SK-N-SH (cell line): ENCODE measurements at regions of chr3 and their contacts with region 1.

Region 1: DNA sequence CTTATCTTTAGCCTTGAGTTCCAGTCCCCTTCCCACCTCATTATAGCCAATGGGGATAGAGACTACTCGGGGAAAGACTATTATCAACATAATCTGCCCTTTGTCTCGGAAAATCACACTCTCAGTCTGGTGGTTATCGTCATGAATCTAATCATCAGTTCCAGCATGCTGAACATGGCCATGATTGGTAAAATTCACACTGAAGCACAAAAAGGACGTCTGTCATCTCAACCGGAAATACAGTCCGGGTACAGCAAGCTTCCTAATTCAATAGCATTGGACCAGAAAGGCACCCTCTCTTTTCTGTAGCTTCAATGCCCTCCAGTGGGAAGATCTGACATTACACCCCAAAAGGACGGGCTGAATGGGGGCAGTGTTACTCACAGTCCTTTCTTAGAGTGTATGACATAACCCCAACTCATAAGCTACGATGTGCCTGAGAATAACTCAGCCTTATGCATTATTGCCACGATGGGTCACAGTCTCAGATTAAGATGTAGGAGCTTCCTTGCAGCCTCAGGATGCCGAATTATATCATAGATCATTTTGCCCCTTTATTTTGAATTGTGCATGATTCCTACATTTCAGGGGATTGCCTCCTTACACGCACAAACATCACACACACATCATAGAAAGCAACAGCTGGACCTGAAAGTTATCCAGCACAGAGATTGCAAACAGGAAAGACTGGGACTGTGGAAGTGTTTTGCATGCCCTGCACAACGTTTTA is 390.4 kb upstream of the LMCD1 start:
- DNase-seq: peak; percentile 68
- H3K4me3 ChIP-seq: peak overlapping the region; percentile 19 to 40; a peak in 2 of 4 replicates
- H3K27ac ChIP-seq: peak overlapping the region in 1 of 2 experiments; percentile 72; a peak in 2 of 4 replicates
- H3K4me1 ChIP-seq: peaks cover 0 to 5% of the 10 kb centered on the region in 2 experiments; a peak in 2 of 4 replicates
- H3K27me3 ChIP-seq: no peaks in the 10 kb centered on the region
- CTCF ChIP-seq: peak; percentile 52
- EP300 ChIP-seq: peak in 1 of 2 experiments; percentile 58; a peak in 1 of 4 replicates
- RAD21 ChIP-seq: peak; percentile 97

Region 2: DNA sequence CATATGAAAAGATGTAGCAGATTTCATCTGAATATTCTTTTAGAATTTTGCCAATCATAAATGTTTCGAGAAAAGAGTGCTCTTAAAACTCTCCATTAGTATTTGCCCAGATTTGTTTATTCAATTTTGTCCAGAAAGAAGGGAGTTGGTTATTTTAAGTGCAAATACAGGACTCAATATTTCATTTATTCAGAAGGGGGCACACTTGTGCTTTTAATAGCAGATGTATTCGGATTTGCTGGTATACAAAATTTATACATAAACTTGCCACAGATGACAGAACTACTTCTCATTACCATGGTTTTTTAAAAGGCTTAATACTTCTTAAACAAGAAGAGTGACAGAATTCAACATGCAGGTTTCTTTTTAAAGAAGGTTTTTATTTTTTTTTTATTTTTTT is 1320.1 kb before region 1 on chr3:
- CTCF ChIA-PET with region 1: interaction called, 15 read pairs
- POLR2A ChIA-PET with region 1: no interaction called
- DNase-seq: no peak
- H3K4me3 ChIP-seq: no peak overlapping the region
- H3K27ac ChIP-seq: no peak overlapping the region
- H3K4me1 ChIP-seq: no peaks in the 10 kb centered on the region
- H3K27me3 ChIP-seq: no peaks in the 10 kb centered on the region
- CTCF ChIP-seq: no peak
- EP300 ChIP-seq: no peak
- RAD21 ChIP-seq: peak; percentile 85

Region 3: GRCh38 chr3:8095724-8096123 is 15.5 kb before region 1 on chr3:
- CTCF ChIA-PET with region 1: interaction called, 16 read pairs
- POLR2A ChIA-PET with region 1: no interaction called
- DNase-seq: no peak
- H3K4me3 ChIP-seq: no peak overlapping the region
- H3K27ac ChIP-seq: no peak overlapping the region
- H3K4me1 ChIP-seq: peaks cover 0 to 3% of the 10 kb centered on the region in 2 experiments; a peak in 2 of 4 replicates
- H3K27me3 ChIP-seq: no peaks in the 10 kb centered on the region
- CTCF ChIP-seq: no peak
- EP300 ChIP-seq: no peak
- RAD21 ChIP-seq: peak; percentile 37; the same call in 1 of the 2 replicates

Region 4: DNA sequence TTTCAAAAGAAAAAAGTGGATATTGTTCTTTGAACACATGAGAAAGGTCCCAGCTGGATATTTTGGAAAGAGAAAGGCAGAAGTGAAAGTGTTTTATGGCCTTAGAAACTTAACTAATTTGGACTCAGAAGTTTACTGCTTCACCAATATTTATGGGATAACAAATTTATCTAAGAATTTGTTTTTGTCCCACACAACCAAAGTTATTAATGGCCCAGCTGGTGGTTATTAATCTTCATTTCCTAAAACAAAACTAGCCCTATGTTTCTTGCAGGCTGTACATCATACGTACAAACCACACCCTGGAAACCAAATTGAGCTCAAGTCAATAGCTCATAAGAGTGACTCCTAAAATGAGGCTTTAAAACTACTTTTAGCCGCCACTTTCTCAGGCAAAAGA is 17.5 kb after region 1 on chr3:
- CTCF ChIA-PET with region 1: interaction called, 14 read pairs
- POLR2A ChIA-PET with region 1: no interaction called
- DNase-seq: no peak
- H3K4me3 ChIP-seq: no peak overlapping the region
- H3K27ac ChIP-seq: no peak overlapping the region
- H3K4me1 ChIP-seq: no peaks in the 10 kb centered on the region
- H3K27me3 ChIP-seq: no peaks in the 10 kb centered on the region
- CTCF ChIP-seq: no peak
- EP300 ChIP-seq: no peak
- RAD21 ChIP-seq: no peak

Region 5: GRCh38 chr3:8261018-8261417 is 149.8 kb after region 1 on chr3:
- CTCF ChIA-PET with region 1: no interaction called
- POLR2A ChIA-PET with region 1: no interaction called
- DNase-seq: no peak
- H3K4me3 ChIP-seq: no peak overlapping the region
- H3K27ac ChIP-seq: no peak overlapping the region
- H3K4me1 ChIP-seq: peaks cover 0 to 11% of the 10 kb centered on the region in 2 experiments; a peak in 1 of 4 replicates
- H3K27me3 ChIP-seq: no peaks in the 10 kb centered on the region
- CTCF ChIP-seq: no peak
- EP300 ChIP-seq: no peak
- RAD21 ChIP-seq: no peak

Region 6: GRCh38 chr3:8301728-8302462 is 190.7 kb after region 1 on chr3:
- CTCF ChIA-PET with region 1: interaction called, 12 read pairs
- POLR2A ChIA-PET with region 1: no interaction called
- DNase-seq: peak; percentile 35
- H3K4me3 ChIP-seq: no peak overlapping the region; a peak in 1 of 4 replicates
- H3K27ac ChIP-seq: no peak overlapping the region
- H3K4me1 ChIP-seq: peaks cover 4 to 7% of the 10 kb centered on the region in 2 experiments; a peak in 2 of 4 replicates
- H3K27me3 ChIP-seq: no peaks in the 10 kb centered on the region
- CTCF ChIP-seq: peak; percentile 74
- EP300 ChIP-seq: no peak
- RAD21 ChIP-seq: peak; percentile 79

Region 7: GRCh38 chr3:8416965-8417364 is 305.7 kb after region 1 on chr3:
- CTCF ChIA-PET with region 1: interaction called, 12 read pairs
- POLR2A ChIA-PET with region 1: no interaction called
- DNase-seq: no peak
- H3K4me3 ChIP-seq: 0 out of 4 replicates have a peak overlapping the region, but pooled peaks of 1 of the 2 experiments have one; percentile 30
- H3K27ac ChIP-seq: no peak overlapping the region
- H3K4me1 ChIP-seq: peaks cover 0 to 18% of the 10 kb centered on the region in 2 experiments; a peak in 2 of 4 replicates
- H3K27me3 ChIP-seq: no peaks in the 10 kb centered on the region
- CTCF ChIP-seq: no peak
- EP300 ChIP-seq: no peak
- RAD21 ChIP-seq: no peak